Breast epithelium (tissue), 4 donors: ENCODE measurements at regions of chr22 and their contacts with region 1.

Region 1: DNA sequence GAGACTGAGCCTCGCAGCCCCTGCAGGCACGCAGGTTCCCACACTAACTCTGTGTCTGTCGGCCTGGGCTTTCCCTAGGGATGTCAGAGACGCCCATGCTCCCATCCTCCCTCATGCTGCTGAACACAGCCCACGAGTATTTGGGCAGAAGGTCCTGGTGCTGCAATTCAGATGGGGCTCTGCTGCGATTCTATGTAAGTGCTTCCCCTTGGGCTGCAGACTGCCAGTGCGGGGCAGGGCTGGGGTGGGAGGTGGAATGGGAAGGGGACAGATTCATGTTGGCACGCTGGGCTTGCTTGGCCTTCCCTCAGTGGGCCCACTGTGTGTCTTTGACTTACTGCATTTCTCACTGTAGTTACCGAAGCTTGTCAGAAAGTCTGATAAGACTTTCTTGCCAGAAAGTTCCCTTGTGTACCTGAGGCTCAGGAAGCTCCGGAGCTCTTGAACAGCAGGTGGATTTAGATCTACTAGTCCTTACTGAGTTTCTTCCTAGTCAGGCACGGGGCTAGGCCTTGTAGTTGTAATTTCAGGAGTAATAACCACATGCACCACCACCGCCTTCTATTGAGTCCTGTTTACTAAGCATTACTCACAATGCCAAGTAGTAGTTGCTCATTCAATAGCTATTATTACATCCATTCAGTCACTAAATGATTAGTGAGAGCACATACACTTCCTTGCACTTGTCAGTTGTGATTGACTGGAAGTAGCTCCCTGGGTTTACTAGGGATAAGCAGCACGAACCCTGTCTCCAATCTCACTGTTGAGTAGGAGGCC is 65.2 kb downstream of the CABIN1 start:
- DNase-seq: no peak
- H3K4me3 ChIP-seq: no peak overlapping the region
- H3K27ac ChIP-seq: no peak overlapping the region
- H3K4me1 ChIP-seq: no peaks in the 10 kb centered on the region
- H3K27me3 ChIP-seq: no peaks in the 10 kb centered on the region
- CTCF ChIP-seq: no peak
- POLR2A ChIP-seq: no peak

Region 2: DNA sequence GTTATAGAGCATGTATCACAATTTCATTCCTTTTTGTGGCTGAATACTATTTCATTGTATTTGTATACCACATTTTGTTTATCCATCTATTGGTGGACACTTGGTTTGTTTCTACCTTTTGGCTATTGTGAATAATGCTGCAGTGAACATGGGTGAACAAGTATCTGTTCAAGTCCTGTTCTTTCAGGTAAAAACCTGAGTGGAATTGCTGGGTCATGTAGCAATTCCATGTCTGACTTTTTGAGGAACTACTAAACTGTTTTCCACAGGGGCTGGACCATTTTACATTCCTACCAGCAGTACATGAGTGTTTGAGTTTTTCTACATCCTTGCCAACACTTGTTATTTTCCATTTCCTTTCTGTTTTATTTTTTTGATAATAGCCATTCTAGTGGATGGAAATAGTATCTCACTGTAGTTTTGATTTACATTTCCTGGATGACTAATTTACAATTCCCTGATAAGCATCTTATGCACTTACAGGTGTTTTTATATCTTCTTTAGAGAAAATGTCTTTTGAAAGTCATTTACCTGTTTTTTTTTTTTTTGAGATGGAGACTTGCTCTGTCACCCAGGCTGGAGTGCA is 53.0 kb before region 1 on chr22:
- intact Hi-C with region 1: loop called (anchors 2 kb)
- DNase-seq: no peak
- H3K4me3 ChIP-seq: no peak overlapping the region
- H3K27ac ChIP-seq: no peak overlapping the region
- H3K4me1 ChIP-seq: no peaks in the 10 kb centered on the region
- H3K27me3 ChIP-seq: no peaks in the 10 kb centered on the region
- CTCF ChIP-seq: no peak
- POLR2A ChIP-seq: no peak

Region 3: GRCh38 chr22:24105013-24105360 is 28.7 kb after region 1 on chr22:
- intact Hi-C with region 1: no loop called
- DNase-seq: no peak
- H3K4me3 ChIP-seq: no peak overlapping the region
- H3K27ac ChIP-seq: peak overlapping the region; percentile 20 to 42
- H3K4me1 ChIP-seq: peaks cover 0 to 3% of the 10 kb centered on the region in 2 donors
- H3K27me3 ChIP-seq: no peaks in the 10 kb centered on the region
- CTCF ChIP-seq: no peak
- POLR2A ChIP-seq: no peak